Dendritic cell treated with granulocyte-macrophage colony-stimulating factor and Interleukin-4, amounts not matched to agents 40 ng/mL and 50 ng/mL, for 4 days (primary cell): ENCODE measurements at regions of chr3 and their contacts with region 1.

Region 1: GRCh38 chr3:9422712-9423424 is 25.5 kb downstream of the SETD5 start:
- H3K4me3 Mint-ChIP-seq: no peak overlapping the region
- H3K27ac Mint-ChIP-seq: peak overlapping the region; percentile 61
- H3K4me1 Mint-ChIP-seq: peaks cover 28% of the 10 kb centered on the region
- H3K27me3 Mint-ChIP-seq: no peaks in the 10 kb centered on the region

Region 2: DNA sequence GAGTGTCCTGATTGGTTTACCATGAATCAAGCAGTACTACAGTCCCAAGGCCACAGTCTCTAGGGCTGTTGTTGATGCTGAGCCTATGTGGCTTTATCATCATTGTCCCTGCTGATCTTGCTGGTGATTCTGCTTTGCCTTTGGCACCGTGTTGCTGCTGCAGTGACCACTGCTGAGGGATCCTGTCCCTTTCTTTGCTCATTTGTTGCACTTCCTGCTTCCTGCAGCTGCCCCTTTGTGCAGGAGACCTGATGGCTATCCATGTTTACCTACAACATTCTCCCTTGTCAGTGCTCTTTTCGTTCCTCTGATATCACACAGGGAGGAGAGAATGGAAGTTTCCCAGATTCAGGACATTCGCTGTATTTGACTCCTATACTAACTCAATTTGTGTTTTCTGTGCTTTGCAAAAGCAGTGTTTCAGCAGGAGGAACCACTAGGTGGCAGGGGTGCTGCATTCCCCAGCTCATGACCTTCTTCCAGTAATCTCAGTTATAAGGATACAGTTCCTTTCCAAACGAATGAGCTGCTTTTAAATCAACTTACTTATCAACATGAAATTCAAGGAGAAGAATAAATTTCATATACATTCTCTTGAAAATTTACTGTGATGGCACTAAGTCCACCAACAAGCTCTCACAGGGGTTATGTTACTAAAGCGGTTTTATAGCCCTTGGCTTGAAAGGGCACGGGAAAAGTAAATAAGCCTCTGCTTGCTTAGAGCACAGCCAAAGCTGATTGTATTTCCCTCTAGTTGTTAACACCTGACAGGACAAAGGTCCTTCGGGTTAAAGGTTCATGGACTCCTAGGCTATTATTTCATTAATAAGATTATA is 69.7 kb before region 1 on chr3:
- intact Hi-C with region 1: loop called (anchors 5 kb)
- H3K4me3 Mint-ChIP-seq: no peak overlapping the region
- H3K27ac Mint-ChIP-seq: no peak overlapping the region
- H3K4me1 Mint-ChIP-seq: peaks cover 21% of the 10 kb centered on the region
- H3K27me3 Mint-ChIP-seq: peaks cover 2% of the 10 kb centered on the region

Region 3: DNA sequence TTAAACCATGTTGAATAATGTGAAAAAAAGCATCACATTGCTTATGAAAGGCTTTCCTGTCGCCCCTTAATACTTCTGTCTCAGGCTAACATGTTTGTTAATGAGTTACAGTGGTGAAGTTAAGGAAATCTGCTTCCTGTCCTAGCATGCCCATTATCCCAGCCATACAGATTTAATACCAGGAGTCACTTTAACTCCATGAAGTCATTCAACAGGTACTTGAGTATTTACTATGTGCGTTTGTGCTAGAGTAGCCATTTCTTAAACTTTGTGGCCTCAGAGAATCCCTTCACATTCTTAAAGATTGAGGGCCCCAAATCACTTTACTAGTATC is 35.6 kb before region 1 on chr3:
- intact Hi-C with region 1: loop called (anchors 2 kb)
- H3K4me3 Mint-ChIP-seq: no peak overlapping the region
- H3K27ac Mint-ChIP-seq: no peak overlapping the region
- H3K4me1 Mint-ChIP-seq: peaks cover 31% of the 10 kb centered on the region
- H3K27me3 Mint-ChIP-seq: no peaks in the 10 kb centered on the region